ENCODE measurements at regions of chr6 and their contacts with region 1.

Region 1: GRCh38 chr6:56555438-56555872 is 87.2 kb downstream of the DST start:
- DNase-seq: peak in 4 of 5 donors; percentile 28 to 51 (median 40)
- ATAC-seq: peak; percentile 88 to 98 (median 91)
- H3K4me3 ChIP-seq: no peak overlapping the region
- H3K27ac ChIP-seq: peak overlapping the region in 10 of 12 donors; percentile 16 to 74 (median 52)
- H3K4me1 ChIP-seq: peaks cover 6 to 54% (median 25%) of the 10 kb centered on the region in 12 donors
- H3K27me3 ChIP-seq: no peaks in the 10 kb centered on the region
- CTCF ChIP-seq: no peak
- POLR2A ChIP-seq: no peak

Region 2: GRCh38 chr6:56491606-56492328 is 63.7 kb before region 1 on chr6:
- intact Hi-C with region 1: loop called in 2 of 10 experiments (anchors 5 to 10 kb)
- DNase-seq: peak in 4 of 5 donors; percentile 69 to 78 (median 72)
- ATAC-seq: peak; percentile 74 to 90 (median 80)
- H3K4me3 ChIP-seq: no peak overlapping the region
- H3K27ac ChIP-seq: peak overlapping the region in 11 of 12 donors; percentile 6 to 71 (median 39)
- H3K4me1 ChIP-seq: peaks cover 0 to 25% (median 13%) of the 10 kb centered on the region in 12 donors
- H3K27me3 ChIP-seq: no peaks in the 10 kb centered on the region
- CTCF ChIP-seq: no peak
- POLR2A ChIP-seq: no peak

Region 3: GRCh38 chr6:56851541-56852259 is 296.2 kb after region 1 on chr6:
- intact Hi-C with region 1: no loop called
- DNase-seq: peak in 3 of 5 donors; percentile 48 to 61 (median 53)
- ATAC-seq: peak; percentile 77 to 92 (median 88)
- H3K4me3 ChIP-seq: peak overlapping the region in 11 of 12 donors; percentile 26 to 75 (median 56)
- H3K27ac ChIP-seq: peak overlapping the region in 11 of 12 donors; percentile 24 to 74 (median 45)
- H3K4me1 ChIP-seq: peaks cover 0 to 39% (median 24%) of the 10 kb centered on the region in 12 donors
- H3K27me3 ChIP-seq: no peaks in the 10 kb centered on the region
- CTCF ChIP-seq: peak; percentile 42 to 76 (median 68)
- POLR2A ChIP-seq: no peak